Mucosa of descending colon (tissue), 3 donors: ENCODE measurements at regions of chr11 and their contacts with region 1.

Region 1: DNA sequence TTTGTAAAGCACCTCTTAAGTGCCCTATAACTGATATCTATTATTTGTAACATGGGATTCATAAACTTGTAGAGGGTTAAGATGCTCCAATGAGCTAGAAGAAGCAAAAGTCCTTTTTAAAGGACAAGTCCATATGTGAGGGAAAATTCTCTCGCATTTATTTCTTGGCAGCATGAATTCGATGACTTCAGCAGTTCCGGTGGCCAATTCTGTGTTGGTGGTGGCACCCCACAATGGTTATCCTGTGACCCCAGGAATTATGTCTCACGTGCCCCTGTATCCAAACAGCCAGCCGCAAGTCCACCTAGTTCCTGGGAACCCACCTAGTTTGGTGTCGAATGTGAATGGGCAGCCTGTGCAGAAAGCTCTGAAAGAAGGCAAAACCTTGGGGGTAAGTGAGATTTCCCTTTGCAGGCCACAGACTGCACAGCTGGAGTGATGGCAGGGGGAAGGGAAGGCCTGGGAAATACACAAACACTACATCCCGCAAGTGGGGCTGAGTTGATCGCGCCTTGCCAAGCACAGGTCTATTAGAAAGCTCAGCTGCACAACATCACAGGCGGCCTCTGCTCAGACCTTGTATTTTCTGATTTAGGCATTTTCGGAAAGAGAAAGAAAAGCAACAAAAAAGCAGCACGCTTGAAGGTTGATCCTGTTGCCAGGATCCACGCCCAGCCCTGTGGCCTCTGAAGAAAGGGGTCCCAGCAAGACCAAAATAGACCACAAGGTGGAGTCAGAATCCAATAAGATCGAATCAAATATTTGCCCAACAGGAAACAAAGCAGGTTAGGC is 1.5 kb downstream of the MS4A8 start:
- DNase-seq: peak in 2 of 3 donors; percentile 41 to 81
- ATAC-seq: peak; percentile 55
- H3K4me3 ChIP-seq: no peak overlapping the region
- H3K4me1 ChIP-seq: peaks cover 21% of the 10 kb centered on the region
- CTCF ChIP-seq: no peak

Region 2: GRCh38 chr11:60349990-60350389 is 350.9 kb before region 1 on chr11:
- intact Hi-C with region 1: no loop called
- DNase-seq: no peak
- ATAC-seq: no peak
- H3K4me3 ChIP-seq: no peak overlapping the region
- H3K4me1 ChIP-seq: no peaks in the 10 kb centered on the region
- CTCF ChIP-seq: no peak

Region 3: GRCh38 chr11:60420015-60420414 is 280.9 kb before region 1 on chr11:
- intact Hi-C with region 1: no loop called
- DNase-seq: no peak
- ATAC-seq: no peak
- H3K4me3 ChIP-seq: no peak overlapping the region
- H3K4me1 ChIP-seq: no peaks in the 10 kb centered on the region
- CTCF ChIP-seq: no peak

Region 4: DNA sequence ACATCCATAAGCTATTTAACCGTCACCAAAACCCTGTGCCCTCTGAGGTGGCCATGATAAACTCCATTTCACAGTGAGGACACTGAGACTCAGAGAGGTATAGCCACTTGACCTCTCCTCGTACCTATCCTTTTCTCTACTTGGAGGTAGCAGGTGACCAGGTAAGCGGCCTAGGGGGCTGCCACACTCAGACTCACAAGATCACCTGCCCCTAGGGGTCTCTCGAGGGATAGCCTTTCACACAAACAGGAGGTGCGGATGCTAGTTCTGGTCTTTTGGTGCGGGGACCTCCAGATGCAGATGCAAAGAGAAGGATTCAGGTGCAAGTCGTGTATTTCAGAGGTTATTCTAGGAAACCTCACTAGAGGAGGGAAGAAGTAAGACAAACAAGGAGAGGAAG is 38.2 kb after region 1 on chr11:
- intact Hi-C with region 1: no loop called
- DNase-seq: no peak
- ATAC-seq: no peak
- H3K4me3 ChIP-seq: no peak overlapping the region
- H3K4me1 ChIP-seq: peaks cover 4% of the 10 kb centered on the region
- CTCF ChIP-seq: no peak

Region 5: GRCh38 chr11:60756307-60757032 is 55.6 kb after region 1 on chr11 and contains the start of gene MS4A15:
- intact Hi-C with region 1: loop called in 1 of 2 experiments (anchors 2 kb)
- DNase-seq: peak in 1 of 3 donors; percentile 28
- ATAC-seq: peak; percentile 64
- H3K4me3 ChIP-seq: no peak within 1 kb of the TSS
- H3K4me1 ChIP-seq: no peaks in the 10 kb centered on the region
- CTCF ChIP-seq: no peak
- total RNA-seq, gene MS4A15: 0.38 TPM in 1 of 3 donors, not detected in the others